HepG2 (cell line): ENCODE measurements at regions of chr14 and their contacts with region 1.

Region 1: DNA sequence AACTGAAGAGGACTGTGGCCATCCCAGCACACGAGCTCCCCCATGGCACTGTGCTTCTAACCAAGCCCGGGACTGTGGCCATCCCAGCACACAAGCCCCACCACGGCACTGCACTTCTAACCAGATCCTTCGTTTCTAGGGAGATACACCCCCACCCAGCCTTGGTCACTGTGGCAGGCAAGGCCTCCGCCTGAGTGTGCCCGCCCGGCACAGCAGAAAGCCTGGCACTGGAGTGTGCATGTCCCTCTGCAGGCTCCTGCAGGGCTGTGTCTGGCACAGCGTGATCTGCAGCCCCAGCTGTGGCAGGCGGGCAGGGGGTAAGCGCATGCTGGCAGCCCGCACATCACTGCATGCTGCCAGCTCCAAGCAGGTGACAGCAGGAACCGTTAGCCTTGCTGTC is 49.8 kb downstream of the CCDC85C start:
- DNase-seq: no peak
- ATAC-seq: peak; percentile 29
- H3K4me3 ChIP-seq: peak overlapping the region in 1 of 3 experiments; percentile 56; a peak in 1 of 6 replicates
- H3K27ac ChIP-seq: peak overlapping the region; percentile 85
- H3K4me1 ChIP-seq: peaks cover 95% of the 10 kb centered on the region
- H3K27me3 ChIP-seq: no peaks in the 10 kb centered on the region
- CTCF ChIP-seq: 0 out of 2 replicates have a peak, but pooled peaks have one; percentile 19
- EP300 ChIP-seq: no peak
- POLR2A ChIP-seq: no peak
- RAD21 ChIP-seq: no peak

Region 2: DNA sequence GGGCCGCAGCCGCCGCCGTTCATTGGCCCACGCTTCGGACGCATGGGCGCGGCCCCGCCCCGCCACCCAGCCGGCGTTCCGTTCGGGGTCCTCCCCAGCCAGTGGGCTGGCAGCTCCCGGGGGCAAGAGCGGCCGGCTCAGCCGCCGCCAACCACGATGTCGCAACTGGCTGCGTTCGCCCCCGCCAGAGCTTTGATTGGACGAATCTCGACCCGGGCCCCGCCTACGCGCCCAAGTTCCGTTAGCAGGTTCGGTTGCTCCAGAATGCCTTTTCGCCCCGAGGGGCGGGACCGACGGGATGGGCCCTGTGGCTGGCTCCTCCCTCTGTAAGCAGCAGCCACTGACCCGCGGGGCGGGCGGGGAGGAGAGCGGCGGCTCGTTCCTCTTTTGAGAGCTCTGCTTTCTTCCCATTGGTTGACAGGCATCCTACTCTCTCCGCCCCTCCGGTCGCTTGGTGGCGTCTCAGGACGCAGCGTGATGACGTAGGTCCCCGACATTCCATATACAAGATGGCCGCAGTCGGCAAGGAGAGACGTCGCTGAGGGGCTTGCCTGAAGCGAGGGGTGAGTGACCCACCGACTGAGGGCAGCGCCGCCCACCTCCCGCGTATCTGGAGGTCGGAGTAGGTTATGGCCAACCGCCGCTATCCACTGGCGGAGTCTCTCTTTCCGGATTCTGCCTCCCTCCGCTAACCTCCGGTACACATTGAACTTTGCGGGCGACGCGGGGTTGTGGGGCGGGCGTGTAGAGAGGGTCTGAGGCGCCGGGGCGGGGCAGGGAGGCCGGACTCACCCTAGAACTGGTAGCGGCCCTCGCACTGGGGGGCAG is 73.1 kb before region 1 on chr14 and contains the start of gene CCNK:
- CTCF ChIA-PET with region 1: no interaction called
- POLR2A ChIA-PET with region 1: interaction called, 14 read pairs
- in situ Hi-C with region 1: no loop called
- intact Hi-C with region 1: no loop called
- DNase-seq: peak; percentile 98
- ATAC-seq: peak; percentile 91
- H3K4me3 ChIP-seq: peak within 1 kb of the TSS; percentile 92 to 97 (median 93)
- H3K27ac ChIP-seq: peak within 1 kb of the TSS; percentile 90
- H3K4me1 ChIP-seq: peaks cover 51% of the 10 kb centered on the region
- H3K27me3 ChIP-seq: no peaks in the 10 kb centered on the region; a peak in 1 of 5 replicates
- CTCF ChIP-seq: no peak; the same call in 1 of the 2 replicates
- EP300 ChIP-seq: no peak
- POLR2A ChIP-seq: peak; percentile 90 to 91
- RAD21 ChIP-seq: no peak
- total RNA-seq, gene CCNK: 9.7 and 16.5 TPM in 2 replicates

Region 3: DNA sequence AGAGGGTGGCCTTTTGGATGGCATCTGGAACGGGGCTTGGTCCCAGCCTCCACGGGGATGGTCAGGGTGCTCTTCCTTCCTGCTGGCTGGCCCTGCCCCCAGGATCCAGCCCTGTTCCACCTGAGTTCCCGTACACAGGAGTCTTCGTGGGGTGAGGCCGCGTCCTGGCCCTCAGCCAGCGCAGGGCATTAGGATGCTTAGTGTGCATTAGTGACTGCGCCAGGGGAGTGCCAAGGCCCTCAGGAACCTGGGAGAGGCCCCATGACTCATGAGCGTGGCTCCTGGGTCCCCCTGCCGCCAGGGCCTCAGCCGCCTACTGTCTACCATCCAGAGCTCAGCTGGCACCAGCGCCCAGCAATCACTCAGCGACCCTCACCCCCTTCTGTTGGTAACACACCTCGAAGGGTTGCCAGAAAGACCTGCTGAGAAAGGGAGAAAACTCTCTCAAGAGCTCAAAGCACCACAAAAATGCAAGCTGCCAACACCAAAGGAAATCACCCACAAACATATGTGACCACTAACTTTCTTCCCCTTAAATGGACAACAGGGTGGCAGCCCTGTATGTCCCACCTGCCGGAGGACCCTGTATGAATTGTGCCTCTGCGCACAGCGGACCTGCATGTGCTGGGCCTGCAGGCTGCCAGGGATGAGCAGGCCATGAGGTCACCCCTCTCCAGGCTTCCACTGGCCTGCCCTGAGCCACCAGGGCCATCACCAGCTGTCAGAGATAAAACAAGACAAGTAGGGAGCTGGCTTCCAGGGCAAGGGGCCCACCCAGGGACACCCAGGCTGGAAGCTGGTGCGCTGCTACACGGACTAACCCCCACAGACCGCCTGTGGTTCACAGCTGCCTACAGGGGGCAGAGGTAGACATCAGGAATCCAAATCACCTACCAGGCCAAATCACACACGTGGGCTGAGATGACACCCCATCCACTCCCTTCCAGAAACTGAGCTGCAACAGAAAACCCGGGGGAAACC is 21.1 kb after region 1 on chr14:
- CTCF ChIA-PET with region 1: no interaction called
- POLR2A ChIA-PET with region 1: interaction called, 21 read pairs
- in situ Hi-C with region 1: no loop called
- intact Hi-C with region 1: loop called (anchors 1 kb)
- DNase-seq: peak; percentile 52
- ATAC-seq: peak; percentile 58
- H3K4me3 ChIP-seq: peak overlapping the region in 1 of 3 experiments; percentile 44; a peak in 1 of 6 replicates
- H3K27ac ChIP-seq: peak overlapping the region; percentile 64
- H3K4me1 ChIP-seq: peaks cover 73% of the 10 kb centered on the region
- H3K27me3 ChIP-seq: no peaks in the 10 kb centered on the region; a peak in 1 of 5 replicates
- CTCF ChIP-seq: peak; percentile 61
- EP300 ChIP-seq: no peak
- POLR2A ChIP-seq: no peak
- RAD21 ChIP-seq: 0 out of 2 replicates have a peak, but pooled peaks have one; percentile 25